Activated B cell treated with CpG ODN at 0.5 μM for 24 hours (primary cell): ENCODE measurements at regions of chr4 and their contacts with region 1.

Region 1: GRCh38 chr4:7802093-7802726 is 137.5 kb downstream of the AFAP1 start:
- DNase-seq: no peak
- ATAC-seq: peak; percentile 85
- H3K4me3 Mint-ChIP-seq: no peak overlapping the region
- H3K27ac Mint-ChIP-seq: no peak overlapping the region
- H3K4me1 Mint-ChIP-seq: no peaks in the 10 kb centered on the region
- H3K27me3 Mint-ChIP-seq: peaks cover 20% of the 10 kb centered on the region
- CTCF ChIP-seq: no peak

Region 2: DNA sequence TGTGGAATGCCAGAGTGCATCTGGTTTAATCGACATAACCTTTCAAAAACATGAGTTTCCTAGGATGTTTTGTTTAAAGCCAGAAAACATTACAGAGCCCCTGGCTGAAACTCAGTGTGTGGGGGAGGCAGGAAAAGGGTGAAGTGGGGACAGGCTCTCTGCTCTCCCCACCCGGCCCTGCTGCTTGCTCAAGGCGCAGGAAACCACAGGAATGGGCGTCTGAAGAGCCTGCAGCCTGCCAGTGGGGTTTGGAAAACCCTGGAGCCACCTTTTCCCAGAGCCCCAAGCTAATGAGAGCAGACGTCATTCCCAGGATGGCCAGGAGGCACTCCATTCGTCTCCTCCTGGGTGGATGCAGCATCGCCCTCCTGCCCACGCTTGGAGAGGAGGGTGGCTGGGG is 103.2 kb before region 1 on chr4:
- CTCF ChIA-PET with region 1: no interaction called
- POLR2A ChIA-PET with region 1: no interaction called
- intact Hi-C with region 1: no loop called
- DNase-seq: no peak
- ATAC-seq: no peak
- H3K4me3 Mint-ChIP-seq: no peak overlapping the region
- H3K27ac Mint-ChIP-seq: no peak overlapping the region
- H3K4me1 Mint-ChIP-seq: no peaks in the 10 kb centered on the region
- H3K27me3 Mint-ChIP-seq: peaks cover 2% of the 10 kb centered on the region
- CTCF ChIP-seq: no peak

Region 3: GRCh38 chr4:7761720-7762119 is 40.5 kb before region 1 on chr4:
- CTCF ChIA-PET with region 1: interaction called, 4 read pairs
- POLR2A ChIA-PET with region 1: no interaction called
- intact Hi-C with region 1: loop called (anchors 1 kb)
- DNase-seq: no peak
- ATAC-seq: peak; percentile 67
- H3K4me3 Mint-ChIP-seq: no peak overlapping the region
- H3K27ac Mint-ChIP-seq: no peak overlapping the region
- H3K4me1 Mint-ChIP-seq: peaks cover 3% of the 10 kb centered on the region
- H3K27me3 Mint-ChIP-seq: peaks cover 5% of the 10 kb centered on the region
- CTCF ChIP-seq: no peak

Region 4: GRCh38 chr4:8192748-8193738 is 390.8 kb after region 1 on chr4:
- CTCF ChIA-PET with region 1: interaction called, 29 read pairs
- POLR2A ChIA-PET with region 1: no interaction called
- intact Hi-C with region 1: no loop called
- DNase-seq: peak; percentile 52
- ATAC-seq: peak; percentile 99
- H3K4me3 Mint-ChIP-seq: peak overlapping the region; percentile 20
- H3K27ac Mint-ChIP-seq: peak overlapping the region; percentile 69
- H3K4me1 Mint-ChIP-seq: peaks cover 36% of the 10 kb centered on the region
- H3K27me3 Mint-ChIP-seq: peaks cover 2% of the 10 kb centered on the region
- CTCF ChIP-seq: no peak

Region 5: DNA sequence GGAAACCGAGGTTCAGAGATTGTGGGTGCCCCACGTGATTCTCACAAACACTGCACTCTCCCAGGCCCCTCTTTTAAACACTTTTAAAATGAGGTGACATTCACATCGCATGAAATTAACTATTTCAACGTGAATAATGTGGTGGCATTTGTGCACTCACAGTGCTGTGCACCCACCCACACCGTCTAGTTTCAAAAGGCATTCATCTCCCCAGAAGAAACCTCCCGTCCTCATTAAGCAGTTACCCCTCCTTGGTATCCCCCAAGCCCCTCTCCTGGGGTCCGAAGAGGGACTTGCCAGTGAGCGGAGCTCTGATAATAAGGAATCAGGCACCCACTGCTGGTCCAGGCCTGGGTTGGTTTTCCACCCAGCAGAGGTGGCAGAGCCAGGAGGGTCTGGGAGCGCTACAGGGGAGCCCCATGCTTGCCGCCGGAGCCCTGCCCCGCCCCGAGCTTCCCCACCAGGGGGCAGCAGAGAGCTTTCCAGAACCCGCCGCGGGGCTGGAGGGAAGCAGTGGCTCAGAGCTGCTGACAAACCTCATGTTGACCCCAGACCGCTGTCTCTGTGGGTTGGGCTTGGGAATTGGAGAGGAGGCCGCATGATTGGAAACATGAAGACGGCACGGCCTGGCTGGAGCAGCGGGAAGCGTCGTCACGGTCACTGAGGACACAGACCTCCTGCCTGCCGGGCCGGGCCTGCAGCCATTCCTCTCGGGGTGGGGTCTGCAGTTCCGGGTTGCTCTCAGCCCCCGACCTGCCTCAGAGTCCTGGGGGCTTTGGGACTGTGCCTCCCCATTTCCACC is 439.9 kb after region 1 on chr4:
- CTCF ChIA-PET with region 1: no interaction called
- POLR2A ChIA-PET with region 1: no interaction called
- intact Hi-C with region 1: loop called (anchors 5 kb)
- DNase-seq: peak; percentile 85
- ATAC-seq: peak; percentile 74
- H3K4me3 Mint-ChIP-seq: no peak overlapping the region
- H3K27ac Mint-ChIP-seq: no peak overlapping the region
- H3K4me1 Mint-ChIP-seq: peaks cover 21% of the 10 kb centered on the region
- H3K27me3 Mint-ChIP-seq: no peaks in the 10 kb centered on the region
- CTCF ChIP-seq: peak; percentile 83

Region 6: GRCh38 chr4:8403173-8403753 is 601.1 kb after region 1 on chr4:
- CTCF ChIA-PET with region 1: interaction called, 6 read pairs
- POLR2A ChIA-PET with region 1: no interaction called
- intact Hi-C with region 1: loop called (anchors 2 kb)
- DNase-seq: peak; percentile 50
- ATAC-seq: peak; percentile 50
- H3K4me3 Mint-ChIP-seq: no peak overlapping the region
- H3K27ac Mint-ChIP-seq: no peak overlapping the region
- H3K4me1 Mint-ChIP-seq: peaks cover 5% of the 10 kb centered on the region
- H3K27me3 Mint-ChIP-seq: no peaks in the 10 kb centered on the region
- CTCF ChIP-seq: peak; percentile 39

Region 7: GRCh38 chr4:8917868-8918783 is 1115.9 kb after region 1 on chr4:
- CTCF ChIA-PET with region 1: interaction called, 3 read pairs
- POLR2A ChIA-PET with region 1: no interaction called
- intact Hi-C with region 1: loop called (anchors 2 kb)
- DNase-seq: peak; percentile 57
- ATAC-seq: peak; percentile 82
- H3K4me3 Mint-ChIP-seq: no peak overlapping the region
- H3K27ac Mint-ChIP-seq: no peak overlapping the region
- H3K4me1 Mint-ChIP-seq: no peaks in the 10 kb centered on the region
- H3K27me3 Mint-ChIP-seq: peaks cover 5% of the 10 kb centered on the region
- CTCF ChIP-seq: peak; percentile 43